Activated CD4-positive, alpha-beta memory T cell treated with anti-CD3 and anti-CD28 coated beads for 36 hours (primary cell): ENCODE measurements at regions of chr9 and their contacts with region 1.

Region 1: DNA sequence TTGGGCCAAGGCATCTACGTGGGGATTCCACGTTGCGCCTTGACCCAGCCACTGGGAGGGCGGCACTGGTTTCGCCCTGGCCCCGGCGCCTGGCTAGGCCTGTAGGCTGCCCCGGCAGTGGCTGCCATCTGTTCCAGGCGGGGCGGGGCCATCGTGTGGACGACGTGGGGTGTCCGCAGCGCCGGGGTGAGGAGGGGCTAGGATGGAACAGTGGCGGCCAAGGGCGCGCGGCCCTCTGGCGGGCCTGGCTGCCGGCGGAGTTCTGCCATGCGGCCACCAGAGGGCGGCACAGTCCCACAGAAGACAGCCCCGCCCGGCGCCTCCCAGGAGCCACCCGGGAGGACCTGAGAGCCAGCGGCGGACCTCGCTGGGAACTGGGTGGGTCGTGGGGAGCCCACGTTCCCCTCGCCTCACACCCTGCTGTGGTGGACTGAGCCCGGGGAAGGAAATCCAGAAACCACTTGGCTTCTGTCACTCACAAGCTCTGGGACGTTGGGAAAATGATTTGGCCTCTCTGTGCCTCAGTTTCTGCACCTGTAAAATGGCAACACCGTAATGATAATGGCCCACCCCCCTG is 22.6 kb upstream of the RAPGEF1 start:
- DNase-seq: peak; percentile 83
- H3K4me3 Mint-ChIP-seq: no peak overlapping the region
- H3K27ac Mint-ChIP-seq: no peak overlapping the region
- H3K4me1 Mint-ChIP-seq: peaks cover 14% of the 10 kb centered on the region
- H3K27me3 Mint-ChIP-seq: peaks cover 7% of the 10 kb centered on the region

Region 2: DNA sequence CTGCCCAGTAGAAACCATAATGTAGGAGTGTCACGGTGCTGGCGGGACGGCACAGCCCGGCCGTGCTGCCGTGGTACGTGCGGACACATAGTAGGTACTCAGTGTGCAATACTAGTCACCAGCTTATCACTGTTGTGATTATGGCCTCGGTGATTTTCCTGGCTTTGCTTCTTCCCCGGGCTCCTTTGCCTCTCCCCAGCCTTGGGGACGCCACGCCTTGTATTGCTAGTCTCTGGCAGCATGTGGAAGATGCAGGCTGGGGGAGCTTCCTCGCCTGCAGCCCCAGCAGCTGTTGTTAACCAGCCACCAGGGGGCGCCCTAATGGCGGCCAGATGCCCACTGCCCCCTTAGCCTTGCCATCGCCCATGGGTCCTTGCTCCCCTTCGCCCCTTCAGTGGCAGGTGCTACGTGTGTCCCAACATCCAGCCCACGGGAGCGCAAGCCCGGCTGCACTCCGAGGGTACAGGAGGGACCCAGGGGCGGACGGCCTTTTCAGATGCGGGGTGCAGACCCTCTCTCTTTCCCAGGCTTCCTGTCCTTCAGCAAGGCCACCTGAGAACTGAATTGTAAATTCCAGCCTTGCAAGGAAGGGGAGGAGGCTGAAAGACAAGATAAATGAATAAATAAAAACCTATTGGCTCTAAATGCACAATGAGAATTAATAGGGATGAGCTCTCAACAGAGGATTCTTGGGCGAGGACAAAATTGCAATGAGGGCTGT is 407.4 kb after region 1 on chr9:
- CTCF ChIA-PET with region 1: interaction called, 14 read pairs
- POLR2A ChIA-PET with region 1: no interaction called
- intact Hi-C with region 1: loop called (anchors 1 kb)
- DNase-seq: peak; percentile 64
- H3K4me3 Mint-ChIP-seq: no peak overlapping the region
- H3K27ac Mint-ChIP-seq: no peak overlapping the region
- H3K4me1 Mint-ChIP-seq: no peaks in the 10 kb centered on the region
- H3K27me3 Mint-ChIP-seq: peaks cover 40% of the 10 kb centered on the region

Region 3: GRCh38 chr9:132249123-132249522 is 486.7 kb after region 1 on chr9:
- CTCF ChIA-PET with region 1: interaction called, 103 read pairs
- POLR2A ChIA-PET with region 1: no interaction called
- intact Hi-C with region 1: no loop called
- DNase-seq: no peak
- H3K4me3 Mint-ChIP-seq: no peak overlapping the region
- H3K27ac Mint-ChIP-seq: no peak overlapping the region
- H3K4me1 Mint-ChIP-seq: no peaks in the 10 kb centered on the region
- H3K27me3 Mint-ChIP-seq: peaks cover 4% of the 10 kb centered on the region

Region 4: GRCh38 chr9:132260846-132261245 is 498.4 kb after region 1 on chr9:
- CTCF ChIA-PET with region 1: interaction called, 10 read pairs
- POLR2A ChIA-PET with region 1: interaction called, 4 read pairs
- intact Hi-C with region 1: no loop called
- DNase-seq: no peak
- H3K4me3 Mint-ChIP-seq: no peak overlapping the region
- H3K27ac Mint-ChIP-seq: no peak overlapping the region
- H3K4me1 Mint-ChIP-seq: peaks cover 8% of the 10 kb centered on the region
- H3K27me3 Mint-ChIP-seq: no peaks in the 10 kb centered on the region

Region 5: GRCh38 chr9:132268725-132269352 is 506.4 kb after region 1 on chr9:
- CTCF ChIA-PET with region 1: interaction called, 12 read pairs
- POLR2A ChIA-PET with region 1: no interaction called
- intact Hi-C with region 1: no loop called
- DNase-seq: peak; percentile 82
- H3K4me3 Mint-ChIP-seq: no peak overlapping the region
- H3K27ac Mint-ChIP-seq: peak overlapping the region; percentile 77
- H3K4me1 Mint-ChIP-seq: peaks cover 7% of the 10 kb centered on the region
- H3K27me3 Mint-ChIP-seq: no peaks in the 10 kb centered on the region